CD4-positive, alpha-beta T cell (primary cell): ENCODE measurements at regions of chr11 and their contacts with region 1.

Region 1: DNA sequence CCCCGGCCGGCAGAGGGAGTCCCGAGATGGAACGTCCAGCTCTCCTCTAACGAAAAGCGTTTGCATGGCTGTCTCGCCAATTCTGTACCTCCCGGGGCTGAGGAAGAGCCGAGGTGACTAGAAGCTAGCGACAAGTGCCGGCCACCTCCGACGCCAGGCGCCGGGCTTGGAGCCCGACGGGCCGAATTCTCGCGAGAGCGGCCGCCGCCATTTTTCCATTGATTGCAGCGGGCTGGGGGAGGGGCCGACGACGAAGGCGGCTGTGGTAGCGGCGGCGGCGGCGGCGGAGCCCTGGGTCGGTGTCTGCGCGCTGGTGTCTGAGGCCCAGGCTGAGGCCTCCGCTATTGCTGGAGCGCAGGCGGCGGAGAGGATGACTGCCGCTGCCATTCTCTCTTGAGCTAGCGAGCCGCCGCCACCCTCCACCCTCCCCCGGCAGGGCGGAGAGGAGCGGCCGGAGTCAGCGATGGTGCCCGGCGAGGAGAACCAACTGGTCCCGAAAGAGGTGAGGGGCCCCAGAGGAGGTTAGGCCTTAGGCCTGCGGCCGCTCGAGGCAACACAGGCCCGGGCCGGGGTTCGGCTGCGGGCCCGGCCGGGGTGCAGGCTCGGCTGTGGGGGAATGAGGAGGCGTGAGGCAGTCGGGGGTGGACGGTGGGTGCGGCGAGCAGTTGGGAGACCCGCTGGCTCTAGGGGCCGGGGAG is at the start of gene USP47:
- DNase-seq: peak; percentile 92 to 97 (median 94)
- ATAC-seq: peak; percentile 69
- H3K4me3 ChIP-seq: peak within 1 kb of the TSS; percentile 87
- H3K4me3 Mint-ChIP-seq: no peak within 1 kb of the TSS
- H3K27ac ChIP-seq: peak within 1 kb of the TSS; percentile 91 to 99
- H3K27ac Mint-ChIP-seq: no peak within 1 kb of the TSS
- H3K4me1 ChIP-seq: peaks cover 19% of the 10 kb centered on the region
- H3K4me1 Mint-ChIP-seq: peaks cover 3% of the 10 kb centered on the region
- H3K27me3 ChIP-seq: peaks cover 0 to 5% of the 10 kb centered on the region in 2 experiments
- H3K27me3 Mint-ChIP-seq: peaks cover 16% of the 10 kb centered on the region
- CTCF ChIP-seq: peak; percentile 62
- total RNA-seq, gene USP47: 97.0 to 100 TPM

Region 2: DNA sequence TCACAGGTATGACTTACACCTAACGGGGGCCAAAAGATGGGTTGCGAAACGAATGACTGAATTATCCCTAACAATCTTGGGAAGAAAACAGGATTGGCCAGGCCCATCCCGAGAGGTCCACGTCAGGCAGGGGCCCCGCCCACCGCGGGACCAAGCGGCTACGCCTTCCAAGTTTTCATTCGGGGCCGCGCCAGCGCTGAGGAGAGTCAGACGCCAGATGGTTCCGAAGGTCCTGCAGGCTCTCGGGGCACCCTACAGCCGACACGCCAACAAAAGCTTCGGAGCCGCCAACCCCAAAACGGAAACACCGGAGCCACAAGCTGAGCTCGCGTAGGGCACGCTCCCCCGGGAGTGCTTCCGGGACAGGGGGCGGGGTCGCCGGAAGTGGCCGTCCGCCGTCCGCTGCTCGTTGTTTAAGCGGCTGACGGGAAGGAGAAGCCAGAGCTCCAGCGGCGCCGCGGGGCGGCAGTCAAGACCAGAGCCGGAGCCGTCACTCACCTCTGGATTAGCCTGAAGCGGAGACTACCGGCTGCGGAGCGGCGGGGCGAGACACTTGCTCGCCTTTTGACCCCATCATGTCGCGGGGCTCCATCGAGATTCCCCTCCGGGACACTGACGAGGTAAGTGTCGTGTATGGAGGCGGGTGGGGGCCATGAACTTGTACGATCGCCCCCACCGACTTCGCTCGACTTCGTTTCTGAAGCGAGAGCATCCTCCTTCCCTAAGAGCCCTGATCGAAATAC is 1090.9 kb before region 1 on chr11 and contains the start of gene CTR9:
- CTCF ChIA-PET with region 1: no interaction called
- POLR2A ChIA-PET with region 1: interaction called, 3 read pairs
- intact Hi-C with region 1: loop called in 1 of 2 experiments (anchors 5 kb)
- DNase-seq: peak; percentile 82 to 96 (median 90)
- ATAC-seq: peak; percentile 86
- H3K4me3 ChIP-seq: peak within 1 kb of the TSS; percentile 95
- H3K4me3 Mint-ChIP-seq: peak within 1 kb of the TSS; percentile 97
- H3K27ac ChIP-seq: peak within 1 kb of the TSS; percentile 83 to 84
- H3K27ac Mint-ChIP-seq: peak within 1 kb of the TSS; percentile 93
- H3K4me1 ChIP-seq: peaks cover 14% of the 10 kb centered on the region
- H3K4me1 Mint-ChIP-seq: peaks cover 35% of the 10 kb centered on the region
- H3K27me3 ChIP-seq: no peaks in the 10 kb centered on the region
- H3K27me3 Mint-ChIP-seq: no peaks in the 10 kb centered on the region
- CTCF ChIP-seq: no peak
- total RNA-seq, gene CTR9: 34.0 to 34.7 TPM

Region 3: DNA sequence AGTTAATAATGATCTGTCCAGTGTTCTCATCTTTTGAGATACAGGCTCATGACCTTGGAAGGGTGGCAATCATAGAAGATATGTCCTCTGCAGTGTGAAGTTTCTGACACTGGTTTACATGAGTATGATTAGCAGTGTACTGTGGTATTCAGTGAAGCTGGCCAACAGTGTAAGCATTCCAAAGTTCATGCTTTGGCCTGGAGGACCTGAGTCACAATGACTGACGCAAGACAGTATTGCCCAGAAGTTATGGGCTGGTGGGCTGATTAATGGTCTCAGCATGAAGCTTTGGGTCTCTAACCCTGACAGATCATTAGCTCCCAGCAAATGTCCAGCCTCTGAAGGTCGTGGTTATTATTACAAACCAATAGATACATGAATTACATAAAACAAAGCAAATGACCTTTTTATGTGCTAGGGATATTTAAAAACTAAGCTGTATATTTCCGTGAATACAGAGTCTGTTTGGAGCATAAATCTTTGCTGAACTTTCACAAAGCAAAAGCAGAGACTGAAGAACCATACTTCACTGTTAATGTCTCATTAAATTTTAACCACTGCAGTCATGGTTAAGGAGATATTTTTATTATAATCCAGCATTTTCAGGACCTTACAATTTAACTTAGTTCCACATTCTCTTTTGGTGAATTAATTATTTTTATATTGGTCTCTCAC is 28.4 kb before region 1 on chr11:
- CTCF ChIA-PET with region 1: no interaction called
- POLR2A ChIA-PET with region 1: no interaction called
- intact Hi-C with region 1: no loop called
- DNase-seq: no peak
- ATAC-seq: no peak
- H3K4me3 ChIP-seq: no peak overlapping the region
- H3K4me3 Mint-ChIP-seq: no peak overlapping the region
- H3K27ac ChIP-seq: no peak overlapping the region
- H3K27ac Mint-ChIP-seq: no peak overlapping the region
- H3K4me1 ChIP-seq: no peaks in the 10 kb centered on the region
- H3K4me1 Mint-ChIP-seq: no peaks in the 10 kb centered on the region
- H3K27me3 ChIP-seq: no peaks in the 10 kb centered on the region
- H3K27me3 Mint-ChIP-seq: no peaks in the 10 kb centered on the region
- CTCF ChIP-seq: no peak

Region 4: GRCh38 chr11:11856638-11857037 is 14.8 kb after region 1 on chr11:
- CTCF ChIA-PET with region 1: interaction called, 15 read pairs
- POLR2A ChIA-PET with region 1: interaction called, 32 read pairs
- intact Hi-C with region 1: no loop called
- DNase-seq: peak in 4 of 14 experiments; percentile 31 to 72 (median 60)
- ATAC-seq: peak; percentile 73
- H3K4me3 ChIP-seq: no peak overlapping the region
- H3K4me3 Mint-ChIP-seq: peak overlapping the region; percentile 72
- H3K27ac ChIP-seq: peak overlapping the region in 1 of 2 donors; percentile 58
- H3K27ac Mint-ChIP-seq: peak overlapping the region; percentile 69
- H3K4me1 ChIP-seq: peaks cover 25% of the 10 kb centered on the region
- H3K4me1 Mint-ChIP-seq: peaks cover 80% of the 10 kb centered on the region
- H3K27me3 ChIP-seq: no peaks in the 10 kb centered on the region
- H3K27me3 Mint-ChIP-seq: no peaks in the 10 kb centered on the region
- CTCF ChIP-seq: no peak

Region 5: GRCh38 chr11:12139144-12139881 is 297.4 kb after region 1 on chr11:
- CTCF ChIA-PET with region 1: no interaction called
- POLR2A ChIA-PET with region 1: no interaction called
- intact Hi-C with region 1: no loop called
- DNase-seq: no peak
- ATAC-seq: no peak
- H3K4me3 ChIP-seq: no peak overlapping the region
- H3K4me3 Mint-ChIP-seq: no peak overlapping the region
- H3K27ac ChIP-seq: no peak overlapping the region
- H3K27ac Mint-ChIP-seq: peak overlapping the region; percentile 78
- H3K4me1 ChIP-seq: peaks cover 55% of the 10 kb centered on the region
- H3K4me1 Mint-ChIP-seq: peaks cover 67% of the 10 kb centered on the region
- H3K27me3 ChIP-seq: no peaks in the 10 kb centered on the region
- H3K27me3 Mint-ChIP-seq: no peaks in the 10 kb centered on the region
- CTCF ChIP-seq: no peak